ENCODE measurements at regions of chr16 and their contacts with region 1.

Region 1: GRCh38 chr16:50326949-50327402 is 41.8 kb downstream of the BRD7 start:
- DNase-seq: peak; percentile 36
- ATAC-seq: peak; percentile 68
- H3K4me3 ChIP-seq: no peak overlapping the region
- H3K27ac ChIP-seq: no peak overlapping the region
- H3K4me1 ChIP-seq: peaks cover 3% of the 10 kb centered on the region; the same call in 1 of the 2 replicates
- H3K27me3 ChIP-seq: no peaks in the 10 kb centered on the region
- CTCF ChIP-seq: peak; percentile 46
- POLR2A ChIP-seq: no peak
- RAD21 ChIP-seq: peak; percentile 45

Region 2: GRCh38 chr16:50665128-50665878 is 338.3 kb after region 1 on chr16:
- CTCF ChIA-PET with region 1: interaction called, 7 read pairs
- POLR2A ChIA-PET with region 1: no interaction called
- dilution Hi-C with region 1: no loop called
- in situ Hi-C with region 1: no loop called
- intact Hi-C with region 1: loop called (anchors 1 kb)
- DNase-seq: peak; percentile 57
- ATAC-seq: peak; percentile 98
- H3K4me3 ChIP-seq: peak overlapping the region; percentile 47
- H3K27ac ChIP-seq: no peak overlapping the region
- H3K4me1 ChIP-seq: no peaks in the 10 kb centered on the region
- H3K27me3 ChIP-seq: no peaks in the 10 kb centered on the region; the same call in 1 of the 2 replicates
- CTCF ChIP-seq: peak; percentile 94
- POLR2A ChIP-seq: no peak
- RAD21 ChIP-seq: peak; percentile 83

Measured in IMR-90 (cell line).